Activated CD8-positive, alpha-beta T cell treated with anti-CD3 and anti-CD28 coated beads for 36 hours (primary cell): ENCODE measurements at regions of chr9 and their contacts with region 1.

Region 1: GRCh38 chr9:113173341-113173740 is 22.5 kb downstream of the SLC31A2 start:
- DNase-seq: no peak
- ATAC-seq: no peak
- H3K4me3 Mint-ChIP-seq: no peak overlapping the region
- H3K27ac Mint-ChIP-seq: no peak overlapping the region
- H3K4me1 Mint-ChIP-seq: no peaks in the 10 kb centered on the region
- H3K27me3 Mint-ChIP-seq: no peaks in the 10 kb centered on the region
- CTCF ChIP-seq: no peak

Region 2: GRCh38 chr9:113187935-113188595 is 14.7 kb after region 1 on chr9:
- CTCF ChIA-PET with region 1: interaction called, 15 read pairs
- POLR2A ChIA-PET with region 1: no interaction called
- intact Hi-C with region 1: no loop called
- DNase-seq: no peak
- ATAC-seq: no peak
- H3K4me3 Mint-ChIP-seq: no peak overlapping the region
- H3K27ac Mint-ChIP-seq: no peak overlapping the region
- H3K4me1 Mint-ChIP-seq: no peaks in the 10 kb centered on the region
- H3K27me3 Mint-ChIP-seq: no peaks in the 10 kb centered on the region
- CTCF ChIP-seq: no peak

Region 3: GRCh38 chr9:113210815-113211214 is 37.5 kb after region 1 on chr9:
- CTCF ChIA-PET with region 1: no interaction called
- POLR2A ChIA-PET with region 1: no interaction called
- intact Hi-C with region 1: no loop called
- DNase-seq: no peak
- ATAC-seq: no peak
- H3K4me3 Mint-ChIP-seq: no peak overlapping the region
- H3K27ac Mint-ChIP-seq: no peak overlapping the region
- H3K4me1 Mint-ChIP-seq: peaks cover 8% of the 10 kb centered on the region
- H3K27me3 Mint-ChIP-seq: no peaks in the 10 kb centered on the region
- CTCF ChIP-seq: no peak

Region 4: DNA sequence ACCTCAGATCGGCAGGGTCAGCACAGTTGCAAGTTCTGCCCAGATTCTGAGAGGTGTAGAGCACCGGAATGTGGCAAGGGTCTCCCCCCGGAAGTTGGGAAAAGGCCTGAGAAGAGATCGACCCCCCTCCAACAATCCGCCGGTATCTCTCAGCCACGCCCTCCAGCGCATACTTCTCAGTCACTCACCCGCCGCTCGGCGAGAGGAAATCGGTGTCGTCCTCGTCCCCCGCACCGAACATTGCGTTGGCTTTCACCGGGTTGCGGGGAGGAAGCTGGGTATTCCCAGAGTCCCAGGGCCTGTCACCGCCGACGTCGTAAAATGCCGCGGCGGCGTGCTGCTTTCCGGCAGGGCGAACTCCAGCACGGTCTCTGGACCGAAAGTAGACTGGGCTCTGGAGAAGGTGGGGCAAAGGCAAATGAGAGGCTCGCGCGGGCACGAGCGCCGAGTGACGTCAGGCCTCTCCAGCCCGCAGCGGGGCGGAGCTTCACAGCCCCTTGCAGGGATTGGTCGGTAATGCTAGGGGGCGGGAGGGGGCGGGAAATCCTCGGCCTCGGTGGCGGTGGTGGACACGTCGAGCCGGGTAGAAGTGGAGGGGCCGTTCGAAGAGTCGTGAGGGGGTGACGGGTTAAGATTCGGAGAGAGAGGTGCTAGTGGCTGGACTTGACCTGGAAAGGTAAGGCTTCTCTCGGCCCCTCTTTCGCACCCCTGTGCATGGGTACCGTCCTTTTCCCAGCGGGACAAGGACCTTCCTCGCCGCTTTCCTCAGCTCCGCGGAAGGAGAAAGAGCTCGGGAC is 47.9 kb after region 1 on chr9 and contains the starts of genes FKBP15 and SLC31A1:
- CTCF ChIA-PET with region 1: no interaction called
- POLR2A ChIA-PET with region 1: no interaction called
- intact Hi-C with region 1: no loop called
- DNase-seq: peak; percentile 98
- ATAC-seq: peak; percentile 98
- H3K4me3 Mint-ChIP-seq: peak within 1 kb of the TSS; percentile 86
- H3K27ac Mint-ChIP-seq: peak within 1 kb of the TSS; percentile 89
- H3K4me1 Mint-ChIP-seq: peaks cover 45% of the 10 kb centered on the region
- H3K27me3 Mint-ChIP-seq: no peaks in the 10 kb centered on the region
- CTCF ChIP-seq: no peak
- total RNA-seq, gene FKBP15: 32.5 to 33.7 TPM
- total RNA-seq, gene SLC31A1: 18.3 to 19.2 TPM

Region 5: GRCh38 chr9:113309204-113309813 is 136.0 kb after region 1 on chr9:
- CTCF ChIA-PET with region 1: no interaction called
- POLR2A ChIA-PET with region 1: no interaction called
- intact Hi-C with region 1: no loop called
- DNase-seq: peak; percentile 50
- ATAC-seq: peak; percentile 56
- H3K4me3 Mint-ChIP-seq: no peak overlapping the region
- H3K27ac Mint-ChIP-seq: no peak overlapping the region
- H3K4me1 Mint-ChIP-seq: no peaks in the 10 kb centered on the region
- H3K27me3 Mint-ChIP-seq: no peaks in the 10 kb centered on the region
- CTCF ChIP-seq: peak; percentile 79